Posterior cingulate gyrus (tissue), 11 donors: ENCODE measurements at regions of chr14 and their contacts with region 1.

Region 1: GRCh38 chr14:89416002-89416995 is 734 bp downstream of the FOXN3 start:
- DNase-seq: peak; percentile 96 to 100 (median 98)

Region 2: GRCh38 chr14:89178802-89179535 is 237.3 kb before region 1 on chr14:
- intact Hi-C with region 1: loop called (anchors 2 kb)
- DNase-seq: no peak